Natural killer cell (primary cell): ENCODE measurements at regions of chr1 and their contacts with region 1.

Region 1: GRCh38 chr1:155063550-155064110 is at the start of gene EFNA4:
- DNase-seq: peak; percentile 76 to 92
- ATAC-seq: peak; percentile 79 to 90 (median 83)
- H3K4me3 ChIP-seq: peak within 1 kb of the TSS; percentile 57
- H3K4me3 Mint-ChIP-seq: peak within 1 kb of the TSS; percentile 92
- H3K27ac ChIP-seq: peak within 1 kb of the TSS; percentile 20
- H3K27ac Mint-ChIP-seq: peak within 1 kb of the TSS; percentile 71 to 80
- H3K4me1 ChIP-seq: peaks cover 33% of the 10 kb centered on the region
- H3K4me1 Mint-ChIP-seq: peaks cover 19 to 40% of the 10 kb centered on the region in 2 donors
- H3K27me3 ChIP-seq: no peaks in the 10 kb centered on the region
- H3K27me3 Mint-ChIP-seq: peaks cover 0 to 2% of the 10 kb centered on the region in 2 donors
- CTCF ChIP-seq: no peak
- total RNA-seq, gene EFNA4: 4.6 to 6.8 (median 5.5) TPM

Region 2: DNA sequence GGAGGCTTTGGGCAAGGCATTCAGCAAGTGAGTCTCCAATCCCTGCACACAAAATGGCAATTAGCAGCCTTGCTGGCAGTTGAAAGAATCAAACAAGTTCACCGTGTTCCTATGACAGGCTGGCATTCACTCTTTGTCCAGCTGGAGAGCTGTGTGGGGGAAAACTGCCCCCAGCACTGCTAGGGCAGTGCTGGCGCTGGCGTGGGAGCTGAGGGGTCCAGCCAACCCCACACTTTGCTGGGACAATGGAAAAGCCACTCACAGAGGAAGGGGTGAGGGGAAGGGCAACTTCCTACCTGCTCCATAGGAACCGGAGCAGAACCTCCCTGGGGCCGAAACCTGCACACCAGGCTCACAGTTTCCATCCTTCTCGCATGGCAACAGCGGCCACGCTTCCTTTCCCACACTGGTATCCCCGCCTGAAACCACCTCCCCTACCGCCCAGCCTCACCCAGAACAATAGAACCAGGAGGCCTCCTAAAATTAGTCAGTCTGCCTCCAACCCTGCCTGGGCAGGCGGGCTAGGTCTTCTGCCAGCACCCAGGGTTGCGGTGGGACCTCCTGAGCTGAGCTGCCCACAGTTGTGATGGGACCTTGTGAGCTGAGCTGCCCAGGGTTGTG is 166.7 kb before region 1 on chr1:
- intact Hi-C with region 1: no loop called
- DNase-seq: no peak
- ATAC-seq: no peak
- H3K4me3 ChIP-seq: no peak overlapping the region
- H3K4me3 Mint-ChIP-seq: no peak overlapping the region
- H3K27ac ChIP-seq: no peak overlapping the region
- H3K27ac Mint-ChIP-seq: no peak overlapping the region
- H3K4me1 ChIP-seq: no peaks in the 10 kb centered on the region
- H3K4me1 Mint-ChIP-seq: no peaks in the 10 kb centered on the region
- H3K27me3 ChIP-seq: no peaks in the 10 kb centered on the region
- H3K27me3 Mint-ChIP-seq: peaks cover 0 to 4% of the 10 kb centered on the region in 2 donors
- CTCF ChIP-seq: no peak

Region 3: GRCh38 chr1:154974063-154974807 is 89.4 kb before region 1 on chr1 and contains the start of gene CKS1B:
- intact Hi-C with region 1: loop called (anchors 5 kb)
- DNase-seq: peak; percentile 96 to 99
- ATAC-seq: peak; percentile 78 to 94 (median 85)
- H3K4me3 ChIP-seq: peak within 1 kb of the TSS; percentile 91
- H3K4me3 Mint-ChIP-seq: no peak within 1 kb of the TSS
- H3K27ac ChIP-seq: peak within 1 kb of the TSS; percentile 99
- H3K27ac Mint-ChIP-seq: no peak within 1 kb of the TSS
- H3K4me1 ChIP-seq: peaks cover 43% of the 10 kb centered on the region
- H3K4me1 Mint-ChIP-seq: peaks cover 15 to 26% of the 10 kb centered on the region in 2 donors
- H3K27me3 ChIP-seq: no peaks in the 10 kb centered on the region
- H3K27me3 Mint-ChIP-seq: no peaks in the 10 kb centered on the region
- CTCF ChIP-seq: no peak
- total RNA-seq, gene CKS1B: 8.5 to 13.0 (median 12.9) TPM

Region 4: GRCh38 chr1:155001675-155002463 is 61.8 kb before region 1 on chr1:
- intact Hi-C with region 1: loop called (anchors 5 kb)
- DNase-seq: peak; percentile 97 to 98
- ATAC-seq: peak; percentile 80 to 93 (median 89)
- H3K4me3 ChIP-seq: peak overlapping the region; percentile 75
- H3K4me3 Mint-ChIP-seq: peak overlapping the region; percentile 95
- H3K27ac ChIP-seq: peak overlapping the region; percentile 94
- H3K27ac Mint-ChIP-seq: peak overlapping the region; percentile 82 to 92
- H3K4me1 ChIP-seq: peaks cover 78% of the 10 kb centered on the region
- H3K4me1 Mint-ChIP-seq: peaks cover 30 to 66% of the 10 kb centered on the region in 2 donors
- H3K27me3 ChIP-seq: no peaks in the 10 kb centered on the region
- H3K27me3 Mint-ChIP-seq: no peaks in the 10 kb centered on the region
- CTCF ChIP-seq: no peak

Region 5: DNA sequence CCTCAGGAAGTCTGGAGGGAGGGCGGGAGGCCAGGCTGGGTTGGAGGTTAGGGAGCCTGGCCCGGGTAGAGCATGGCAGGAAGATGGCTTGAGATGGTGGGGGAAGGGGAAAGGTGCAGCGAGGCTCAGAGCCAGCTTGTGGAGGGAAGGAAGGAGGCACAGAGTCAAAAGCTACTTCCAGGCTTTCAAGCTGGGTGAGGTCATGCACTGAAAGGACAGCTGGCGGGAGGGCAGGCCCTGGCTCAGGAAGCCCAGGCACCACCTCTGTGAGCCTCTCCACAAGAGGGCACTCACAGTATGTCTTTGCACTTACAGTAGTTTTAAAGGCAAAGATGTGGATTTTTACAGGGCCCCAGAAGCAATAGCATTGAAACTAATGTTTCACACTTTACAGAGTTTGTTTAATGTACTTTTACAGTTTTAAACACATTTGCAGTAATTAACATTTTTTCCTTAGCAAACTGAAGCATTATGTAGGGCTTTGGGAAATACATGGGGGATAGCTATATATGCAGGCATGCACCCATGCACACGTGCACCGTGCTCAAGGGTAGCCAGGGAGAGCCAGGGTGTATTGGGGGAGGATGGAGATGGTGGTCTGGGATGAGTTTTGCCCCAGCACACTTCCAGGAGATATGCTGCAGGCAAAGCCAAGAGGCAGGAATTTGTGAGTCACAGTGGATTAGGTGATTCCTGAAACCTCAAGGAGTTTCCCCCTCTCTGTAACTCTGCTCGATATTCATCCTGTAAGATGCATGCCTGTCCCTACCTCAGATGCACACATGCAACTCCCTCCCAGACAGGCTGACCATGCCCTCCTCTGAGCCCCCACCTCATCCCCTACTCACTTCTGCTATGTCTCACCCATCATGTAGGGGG is 18.6 kb before region 1 on chr1:
- intact Hi-C with region 1: loop called (anchors 1 kb)
- DNase-seq: peak; percentile 38 to 81
- ATAC-seq: peak; percentile 83 to 99 (median 97)
- H3K4me3 ChIP-seq: no peak overlapping the region
- H3K4me3 Mint-ChIP-seq: no peak overlapping the region
- H3K27ac ChIP-seq: no peak overlapping the region
- H3K27ac Mint-ChIP-seq: no peak overlapping the region
- H3K4me1 ChIP-seq: peaks cover 3% of the 10 kb centered on the region
- H3K4me1 Mint-ChIP-seq: peaks cover 6 to 13% of the 10 kb centered on the region in 2 donors
- H3K27me3 ChIP-seq: no peaks in the 10 kb centered on the region
- H3K27me3 Mint-ChIP-seq: peaks cover 0 to 3% of the 10 kb centered on the region in 2 donors
- CTCF ChIP-seq: peak; percentile 70

Region 6: GRCh38 chr1:155050560-155051341 is 12.9 kb before region 1 on chr1 and contains the start of gene ADAM15:
- intact Hi-C with region 1: loop called (anchors 1 kb)
- DNase-seq: peak; percentile 80 to 90
- ATAC-seq: peak; percentile 76 to 91 (median 84)
- H3K4me3 ChIP-seq: peak within 1 kb of the TSS; percentile 61
- H3K4me3 Mint-ChIP-seq: peak within 1 kb of the TSS; percentile 88
- H3K27ac ChIP-seq: peak within 1 kb of the TSS; percentile 23
- H3K27ac Mint-ChIP-seq: peak within 1 kb of the TSS; percentile 23 to 77
- H3K4me1 ChIP-seq: peaks cover 31% of the 10 kb centered on the region
- H3K4me1 Mint-ChIP-seq: peaks cover 13 to 34% of the 10 kb centered on the region in 2 donors
- H3K27me3 ChIP-seq: no peaks in the 10 kb centered on the region
- H3K27me3 Mint-ChIP-seq: no peaks in the 10 kb centered on the region
- CTCF ChIP-seq: peak; percentile 96
- total RNA-seq, gene ADAM15: 54.6 to 83.2 (median 64.7) TPM

Region 7: GRCh38 chr1:155084722-155085503 is 21.3 kb after region 1 on chr1:
- intact Hi-C with region 1: loop called (anchors 1 kb)
- DNase-seq: peak; percentile 92 to 95
- ATAC-seq: peak; percentile 75 to 91 (median 80)
- H3K4me3 ChIP-seq: peak overlapping the region; percentile 61
- H3K4me3 Mint-ChIP-seq: peak overlapping the region; percentile 94
- H3K27ac ChIP-seq: peak overlapping the region; percentile 88
- H3K27ac Mint-ChIP-seq: peak overlapping the region; percentile 87 to 96
- H3K4me1 ChIP-seq: peaks cover 53% of the 10 kb centered on the region
- H3K4me1 Mint-ChIP-seq: peaks cover 30 to 51% of the 10 kb centered on the region in 2 donors
- H3K27me3 ChIP-seq: peaks cover 43% of the 10 kb centered on the region
- H3K27me3 Mint-ChIP-seq: peaks cover 16 to 24% of the 10 kb centered on the region in 2 donors
- CTCF ChIP-seq: peak; percentile 89

Region 8: GRCh38 chr1:155105604-155106022 is 42.0 kb after region 1 on chr1:
- intact Hi-C with region 1: no loop called
- DNase-seq: no peak
- ATAC-seq: no peak
- H3K4me3 ChIP-seq: no peak overlapping the region
- H3K4me3 Mint-ChIP-seq: no peak overlapping the region
- H3K27ac ChIP-seq: no peak overlapping the region
- H3K27ac Mint-ChIP-seq: no peak overlapping the region
- H3K4me1 ChIP-seq: no peaks in the 10 kb centered on the region
- H3K4me1 Mint-ChIP-seq: peaks cover 0 to 5% of the 10 kb centered on the region in 2 donors
- H3K27me3 ChIP-seq: no peaks in the 10 kb centered on the region
- H3K27me3 Mint-ChIP-seq: peaks cover 0 to 17% of the 10 kb centered on the region in 2 donors
- CTCF ChIP-seq: no peak